ENCODE measurements at regions of chr11 and their contacts with region 1.

Region 1: GRCh38 chr11:124837491-124837856 is 27.8 kb upstream of the ROBO3 start:
- ATAC-seq: peak in 4 of 8 experiments; percentile 28 to 58 (median 50)
- H3K4me3 ChIP-seq: no peak overlapping the region
- H3K27ac ChIP-seq: no peak overlapping the region
- H3K4me1 ChIP-seq: peaks cover 27 to 37% of the 10 kb centered on the region in 2 donors

Region 2: GRCh38 chr11:124602193-124602592 is 235.3 kb before region 1 on chr11:
- in situ Hi-C with region 1: no loop called
- ATAC-seq: peak in 2 of 8 experiments; percentile 20 to 36
- H3K4me3 ChIP-seq: no peak overlapping the region
- H3K27ac ChIP-seq: no peak overlapping the region
- H3K4me1 ChIP-seq: no peaks in the 10 kb centered on the region

Region 3: DNA sequence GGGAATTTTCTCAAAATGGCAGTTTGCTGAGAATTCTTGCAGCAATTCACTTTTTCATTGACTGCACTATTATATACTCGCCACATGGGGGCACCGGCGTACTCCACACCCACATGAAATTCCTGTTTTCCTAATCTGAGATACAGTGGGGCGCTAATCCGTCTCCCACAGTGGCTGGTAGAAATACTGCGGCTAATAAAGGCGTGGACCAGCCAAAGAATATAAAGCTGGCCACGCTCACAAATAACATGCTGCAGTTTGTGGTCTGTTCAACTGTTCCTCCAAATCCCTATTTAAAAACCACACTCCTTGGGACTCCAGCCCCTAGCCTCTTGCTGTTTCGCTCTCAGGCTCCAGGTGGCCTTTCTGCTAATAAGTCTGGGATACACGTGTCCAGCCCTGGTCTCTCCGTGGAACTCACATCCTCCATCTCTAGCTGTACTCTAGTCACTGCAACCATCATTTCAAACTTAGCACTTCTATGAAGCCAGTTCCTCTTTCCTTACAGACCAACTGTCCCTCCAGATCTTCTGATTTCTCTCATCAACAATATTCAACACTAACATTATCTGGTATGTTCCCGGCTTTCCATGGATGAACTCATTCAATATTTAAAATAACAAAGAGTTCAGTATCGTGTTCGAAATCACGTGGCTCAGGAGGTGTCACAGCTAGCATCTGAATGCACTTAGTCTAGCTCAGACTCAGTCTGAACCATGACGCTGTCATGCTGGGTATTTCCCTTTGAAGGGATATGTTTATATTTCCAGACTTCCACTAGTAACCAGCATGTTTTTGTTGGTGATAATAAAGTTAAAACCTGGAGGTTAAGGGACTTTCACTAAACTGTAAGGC is 192.8 kb before region 1 on chr11:
- in situ Hi-C with region 1: loop called in 1 of 9 experiments (anchors 25 kb)
- ATAC-seq: peak; percentile 67 to 95 (median 83)
- H3K4me3 ChIP-seq: no peak overlapping the region
- H3K27ac ChIP-seq: no peak overlapping the region
- H3K4me1 ChIP-seq: no peaks in the 10 kb centered on the region

Region 4: DNA sequence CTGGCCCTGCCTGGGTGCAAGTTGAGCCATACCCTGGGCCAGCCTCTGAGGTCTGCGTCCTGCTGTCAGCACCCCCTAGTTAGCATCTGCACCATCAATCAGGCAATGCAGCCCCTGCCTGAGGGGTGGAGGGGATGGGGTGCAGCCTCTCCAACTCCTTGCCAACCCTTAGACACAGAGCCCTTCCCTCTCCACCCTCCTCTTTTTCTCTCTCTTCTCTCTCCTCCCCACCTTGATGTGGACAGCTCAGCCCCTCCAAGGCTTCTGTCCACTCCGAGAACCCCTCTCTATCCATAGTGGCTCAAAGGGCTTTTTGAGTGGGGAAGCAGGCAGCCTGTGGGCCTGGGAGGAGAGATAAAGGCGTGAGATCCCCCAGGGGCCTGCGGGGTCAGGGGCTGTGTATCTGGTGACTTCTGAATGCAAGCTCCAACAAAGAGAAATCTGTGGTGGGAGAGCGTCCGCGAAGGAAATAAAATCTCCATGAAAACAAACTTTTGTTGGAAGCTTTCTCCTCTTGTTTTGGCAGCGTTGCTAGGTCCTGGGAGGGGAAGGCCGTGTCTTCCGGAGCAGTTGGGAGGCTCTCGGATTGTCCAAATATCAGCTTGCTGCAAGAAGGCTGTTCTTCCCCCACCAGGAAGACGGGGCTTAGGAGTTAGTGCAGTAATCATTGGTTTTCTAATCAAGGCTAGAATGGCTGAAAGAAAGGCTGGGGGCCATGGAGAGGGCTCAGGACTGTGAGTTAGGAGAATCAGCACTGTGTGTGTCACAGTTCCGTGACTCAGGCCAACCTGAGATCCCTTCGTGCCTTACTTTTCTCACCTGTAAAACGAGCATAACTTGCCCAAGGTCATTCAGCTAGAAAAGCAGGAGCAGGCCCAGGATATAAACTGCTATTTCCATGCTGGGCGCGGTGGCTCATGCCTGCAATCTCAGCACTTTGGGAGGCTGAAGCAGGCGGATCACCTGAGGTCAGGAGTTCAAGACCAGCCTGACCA is 377.4 kb after region 1 on chr11:
- in situ Hi-C with region 1: no loop called
- ATAC-seq: peak in 5 of 8 experiments; percentile 62 to 71 (median 65)
- H3K4me3 ChIP-seq: no peak overlapping the region
- H3K27ac ChIP-seq: peak overlapping the region; percentile 34 to 42
- H3K4me1 ChIP-seq: peaks cover 60 to 61% of the 10 kb centered on the region in 2 donors

Measured in motor neuron (in vitro differentiated cells).